ENCODE measurements at regions of chr11 and their contacts with region 1.

Region 1: GRCh38 chr11:56624661-56625110 is 10.0 kb upstream of the OR5M1 start:
- DNase-seq: no peak
- H3K4me3 ChIP-seq: no peak overlapping the region
- H3K27ac ChIP-seq: no peak overlapping the region
- H3K4me1 ChIP-seq: no peaks in the 10 kb centered on the region
- H3K27me3 ChIP-seq: no peaks in the 10 kb centered on the region
- CTCF ChIP-seq: peak in 2 of 3 experiments; percentile 38 to 46; a peak in 2 of 4 replicates
- EP300 ChIP-seq: no peak
- POLR2A ChIP-seq: no peak
- RAD21 ChIP-seq: peak; percentile 71 to 78

Region 2: DNA sequence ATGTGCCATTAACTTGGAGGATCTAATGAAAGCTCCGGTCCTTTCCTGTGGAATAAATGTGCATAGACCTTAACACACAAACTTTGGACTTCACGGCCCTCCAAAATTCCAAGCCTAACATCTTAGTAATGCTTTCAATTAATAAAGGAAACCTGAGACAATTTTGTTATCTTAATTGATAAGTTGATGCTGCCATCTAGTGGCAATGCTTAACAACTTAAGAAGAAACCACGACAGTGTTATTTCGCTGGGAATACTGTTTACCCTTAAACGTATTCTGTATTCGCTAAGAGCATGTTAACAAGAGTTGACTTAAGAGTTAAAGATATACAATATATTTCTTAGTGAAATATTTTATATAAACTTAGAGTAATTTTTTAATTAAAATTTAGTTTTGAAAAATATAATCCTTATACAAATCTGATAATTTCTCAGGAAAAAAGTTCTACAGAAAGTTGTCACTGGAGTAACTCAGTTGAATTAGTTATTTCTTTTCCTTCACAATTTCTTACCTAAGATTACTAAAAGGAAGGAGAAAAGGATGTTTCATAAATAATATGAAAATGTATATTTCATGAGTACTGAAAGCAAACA is 158.9 kb after region 1 on chr11:
- CTCF ChIA-PET with region 1: interaction called, 19 read pairs
- POLR2A ChIA-PET with region 1: no interaction called
- DNase-seq: no peak
- H3K4me3 ChIP-seq: no peak overlapping the region
- H3K27ac ChIP-seq: no peak overlapping the region
- H3K4me1 ChIP-seq: no peaks in the 10 kb centered on the region; a peak in 1 of 7 replicates
- H3K27me3 ChIP-seq: no peaks in the 10 kb centered on the region
- CTCF ChIP-seq: peak in 2 of 3 experiments; percentile 17 to 49; a peak in 2 of 4 replicates
- EP300 ChIP-seq: no peak
- POLR2A ChIP-seq: no peak
- RAD21 ChIP-seq: peak; percentile 83 to 84